ENCODE measurements at regions of chr2 and their contacts with region 1.

Region 1: GRCh38 chr2:201231781-201232466 is 28.4 kb upstream of the CASP8 start:
- DNase-seq: peak; percentile 73
- H3K4me3 ChIP-seq: no peak overlapping the region
- H3K27ac ChIP-seq: no peak overlapping the region
- H3K27me3 ChIP-seq: no peaks in the 10 kb centered on the region
- CTCF ChIP-seq: peak; percentile 92

Region 2: GRCh38 chr2:200809506-200810251 is 422.2 kb before region 1 on chr2:
- CTCF ChIA-PET with region 1: no interaction called
- POLR2A ChIA-PET with region 1: no interaction called
- DNase-seq: no peak
- H3K4me3 ChIP-seq: no peak overlapping the region
- H3K27ac ChIP-seq: peak overlapping the region; percentile 81
- H3K27me3 ChIP-seq: no peaks in the 10 kb centered on the region
- CTCF ChIP-seq: no peak

Region 3: GRCh38 chr2:200901459-200902072 is 330.4 kb before region 1 on chr2:
- CTCF ChIA-PET with region 1: interaction called, 30 read pairs
- POLR2A ChIA-PET with region 1: no interaction called
- DNase-seq: peak; percentile 81
- H3K4me3 ChIP-seq: no peak overlapping the region
- H3K27ac ChIP-seq: no peak overlapping the region
- H3K27me3 ChIP-seq: no peaks in the 10 kb centered on the region
- CTCF ChIP-seq: peak; percentile 84

Region 4: GRCh38 chr2:201158111-201158929 is 73.6 kb before region 1 on chr2:
- CTCF ChIA-PET with region 1: interaction called, 10 read pairs
- POLR2A ChIA-PET with region 1: no interaction called
- DNase-seq: no peak
- H3K4me3 ChIP-seq: no peak overlapping the region
- H3K27ac ChIP-seq: peak overlapping the region; percentile 33
- H3K27me3 ChIP-seq: no peaks in the 10 kb centered on the region
- CTCF ChIP-seq: peak; percentile 83

Region 5: DNA sequence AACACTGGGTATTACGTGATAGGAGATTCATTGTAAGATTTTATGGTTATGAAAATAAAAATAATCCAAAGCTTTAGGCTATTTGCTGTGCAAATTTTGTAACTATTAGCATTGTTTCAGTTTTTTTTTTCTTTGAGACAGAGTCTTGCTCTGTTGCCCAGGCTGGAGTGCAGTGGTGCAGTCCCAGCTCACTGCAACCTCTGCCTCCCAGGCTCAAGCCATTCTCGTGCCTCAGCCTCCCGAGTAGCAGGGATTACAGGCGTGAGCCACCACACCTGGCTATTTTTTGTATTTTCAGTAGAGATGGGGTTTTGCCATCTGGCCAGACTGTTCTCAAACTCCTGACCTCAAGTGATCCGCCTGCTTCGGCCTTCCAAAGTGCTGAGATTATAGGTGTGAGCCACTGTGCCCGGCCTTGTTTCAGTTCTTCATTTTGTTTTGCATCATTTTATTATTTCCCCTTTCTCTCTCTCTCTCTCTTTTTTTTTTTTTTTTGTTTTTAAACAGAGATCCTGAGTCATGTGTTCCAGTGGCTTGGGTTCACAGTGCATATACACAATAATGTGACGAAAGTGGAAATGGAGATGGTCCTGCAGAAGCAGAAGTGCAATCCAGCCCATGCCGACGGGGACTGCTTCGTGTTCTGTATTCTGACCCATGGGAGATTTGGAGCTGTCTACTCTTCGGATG is 23.2 kb before region 1 on chr2:
- CTCF ChIA-PET with region 1: interaction called, 13 read pairs
- POLR2A ChIA-PET with region 1: no interaction called
- DNase-seq: no peak
- H3K4me3 ChIP-seq: no peak overlapping the region
- H3K27ac ChIP-seq: peak overlapping the region; percentile 2
- H3K27me3 ChIP-seq: no peaks in the 10 kb centered on the region
- CTCF ChIP-seq: no peak

Region 6: DNA sequence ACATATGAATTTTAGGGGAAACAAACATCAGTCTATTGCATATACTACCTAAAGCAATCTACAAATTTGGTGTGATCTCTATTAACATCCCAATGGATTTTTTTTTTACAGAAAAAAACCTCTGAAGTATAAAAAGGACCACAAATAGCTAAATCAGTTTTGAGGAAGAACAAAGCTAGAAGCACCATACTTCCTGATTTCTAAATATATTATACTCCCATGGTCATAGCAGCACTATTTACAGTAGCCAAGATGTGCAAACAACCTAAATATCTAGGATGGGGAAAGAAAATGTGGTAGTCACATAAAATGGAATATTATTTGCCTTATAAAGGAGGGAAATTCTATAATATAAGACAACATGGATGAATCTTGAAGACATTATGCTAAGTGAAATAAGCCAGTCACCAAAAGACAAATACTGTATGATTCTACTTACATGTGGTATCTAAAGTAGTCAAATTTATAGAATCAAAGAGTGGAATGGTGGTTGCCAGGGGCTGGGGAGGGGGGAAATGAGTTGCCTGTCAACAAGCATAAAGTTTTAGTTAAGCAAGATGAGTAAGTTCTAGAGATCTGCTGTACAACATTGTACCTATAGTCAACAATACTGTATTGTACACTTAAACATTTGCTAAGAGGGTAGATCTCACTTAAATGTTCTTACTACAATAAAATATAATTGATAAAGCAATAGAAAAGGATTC is 10.8 kb after region 1 on chr2:
- CTCF ChIA-PET with region 1: interaction called, 13 read pairs
- POLR2A ChIA-PET with region 1: no interaction called
- DNase-seq: no peak
- H3K4me3 ChIP-seq: no peak overlapping the region
- H3K27ac ChIP-seq: no peak overlapping the region
- H3K27me3 ChIP-seq: no peaks in the 10 kb centered on the region
- CTCF ChIP-seq: no peak

Region 7: GRCh38 chr2:201451292-201452057 is 219.6 kb after region 1 on chr2 and contains the starts of genes STRADB and TRAK2:
- CTCF ChIA-PET with region 1: interaction called, 12 read pairs
- POLR2A ChIA-PET with region 1: interaction called, 4 read pairs
- DNase-seq: peak; percentile 68
- H3K4me3 ChIP-seq: peak within 1 kb of the TSS; percentile 86
- H3K27ac ChIP-seq: peak within 1 kb of the TSS; percentile 69
- H3K27me3 ChIP-seq: no peaks in the 10 kb centered on the region
- CTCF ChIP-seq: peak; percentile 10; the same call in 1 of the 2 replicates
- polyA plus RNA-seq, gene STRADB: 29.8 and 34.7 TPM in 2 replicates
- polyA plus RNA-seq, gene TRAK2: 32.7 and 38.4 TPM in 2 replicates